Mammary epithelial cell (primary cell): ENCODE measurements at regions of chr20 and their contacts with region 1.

Region 1: DNA sequence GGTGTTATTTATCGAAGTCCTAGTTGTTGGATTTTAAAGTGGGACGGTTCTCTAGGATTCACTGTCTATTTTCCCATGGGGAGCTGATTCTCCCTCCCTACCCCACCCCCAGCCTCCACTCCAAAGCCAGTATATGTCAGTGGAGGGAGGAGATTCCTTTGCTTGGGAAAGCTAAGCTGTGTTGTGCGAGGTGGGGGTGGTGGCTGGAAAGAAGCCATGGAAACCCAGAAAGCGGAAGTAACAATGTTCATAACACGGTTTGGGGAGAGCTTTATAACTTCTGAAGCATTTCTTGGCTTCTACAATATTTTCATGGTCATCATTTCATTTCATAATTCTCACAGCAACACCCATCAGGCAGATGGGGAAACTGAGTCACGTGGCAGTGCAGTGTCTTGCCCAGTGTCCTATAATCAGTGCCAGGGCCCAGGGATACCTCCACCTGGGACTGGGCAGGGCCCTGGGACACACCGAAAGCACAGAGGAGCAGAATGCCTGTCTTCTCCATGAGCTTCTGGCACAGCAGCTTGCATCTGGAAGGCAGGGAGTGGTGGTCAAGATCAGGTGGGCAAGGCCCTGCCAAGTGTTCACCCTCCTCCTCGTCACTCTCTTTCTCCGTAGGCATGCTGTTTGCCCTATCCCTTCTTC is 4.5 kb downstream of the SUN5 start:
- DNase-seq: no peak
- H3K4me3 ChIP-seq: no peak overlapping the region
- H3K27ac ChIP-seq: no peak overlapping the region
- H3K4me1 ChIP-seq: no peaks in the 10 kb centered on the region
- H3K27me3 ChIP-seq: peaks cover 1% of the 10 kb centered on the region
- CTCF ChIP-seq: no peak

Region 2: DNA sequence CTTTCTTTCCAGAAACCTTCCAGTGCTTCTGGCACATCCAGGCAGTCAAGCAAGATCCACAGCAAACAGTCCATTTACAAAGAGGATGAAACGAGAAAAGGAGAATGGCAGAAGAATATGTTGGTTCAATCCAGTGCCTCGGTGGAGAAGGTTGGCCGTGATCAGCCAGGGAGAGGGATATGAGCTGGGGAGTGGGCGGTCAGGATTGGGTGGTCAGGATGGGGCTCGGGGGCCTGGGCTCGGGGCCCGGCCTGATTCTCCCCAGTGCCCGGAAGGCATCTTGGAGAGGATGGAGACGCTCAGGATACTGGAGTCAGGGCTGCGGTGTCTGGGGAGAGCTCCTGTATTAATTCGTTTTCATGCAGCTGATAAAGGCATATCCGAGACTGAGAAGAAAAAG is 79.7 kb before region 1 on chr20:
- CTCF ChIA-PET with region 1: no interaction called
- dilution Hi-C with region 1: loop called (anchors 5 kb)
- in situ Hi-C with region 1: no loop called
- intact Hi-C with region 1: no loop called
- DNase-seq: no peak
- H3K4me3 ChIP-seq: no peak overlapping the region
- H3K27ac ChIP-seq: no peak overlapping the region
- H3K4me1 ChIP-seq: no peaks in the 10 kb centered on the region
- H3K27me3 ChIP-seq: no peaks in the 10 kb centered on the region
- CTCF ChIP-seq: no peak

Region 3: GRCh38 chr20:32945710-32946221 is 54.0 kb before region 1 on chr20:
- CTCF ChIA-PET with region 1: no interaction called
- dilution Hi-C with region 1: loop called (anchors 5 kb)
- in situ Hi-C with region 1: no loop called
- intact Hi-C with region 1: no loop called
- DNase-seq: peak; percentile 4
- H3K4me3 ChIP-seq: no peak overlapping the region
- H3K27ac ChIP-seq: no peak overlapping the region
- H3K4me1 ChIP-seq: no peaks in the 10 kb centered on the region
- H3K27me3 ChIP-seq: no peaks in the 10 kb centered on the region
- CTCF ChIP-seq: peak; percentile 43 to 73

Region 4: DNA sequence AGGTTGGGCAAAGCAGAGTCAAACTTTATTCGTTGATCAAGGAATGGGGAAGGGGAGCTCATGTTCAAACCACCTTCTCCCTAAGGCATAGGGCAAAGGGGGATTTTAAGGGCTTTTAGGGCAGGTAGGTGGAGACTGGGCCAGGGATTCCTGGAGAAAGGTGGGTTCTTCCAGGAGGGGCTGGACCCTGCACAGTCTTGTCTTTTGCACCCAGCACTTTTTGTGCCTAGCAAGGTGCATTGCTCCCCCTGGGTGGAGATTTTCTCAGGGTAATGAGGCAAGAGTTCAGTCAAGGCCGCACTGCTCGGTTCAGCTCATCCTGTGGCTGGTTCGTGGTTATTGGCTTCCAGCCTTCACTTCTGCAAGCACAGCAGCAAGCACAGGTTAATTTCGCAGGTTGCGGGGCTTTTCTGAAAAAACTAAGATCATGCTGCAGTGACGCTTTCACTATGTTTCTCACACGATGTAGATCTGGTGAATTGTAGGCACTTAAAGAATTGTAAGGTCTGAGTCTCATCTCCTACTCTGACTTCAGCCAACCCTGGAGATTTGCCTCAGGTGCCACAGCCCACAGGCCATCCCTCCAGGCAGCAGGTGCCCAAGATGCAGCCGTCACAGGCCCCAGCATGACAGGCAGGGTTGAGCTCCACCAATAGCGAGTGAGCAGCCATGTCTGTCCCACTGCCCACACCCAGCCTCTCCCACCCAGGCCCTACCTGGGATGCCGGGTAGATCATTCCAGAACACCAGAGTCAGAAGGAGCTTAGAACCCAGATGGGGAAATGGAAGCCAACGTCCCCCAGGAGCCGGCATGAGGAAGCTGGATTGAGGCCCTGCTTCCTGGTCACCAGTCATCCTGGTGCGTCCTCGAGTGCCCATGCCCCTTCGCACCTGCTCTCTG is 32.6 kb before region 1 on chr20:
- CTCF ChIA-PET with region 1: no interaction called
- dilution Hi-C with region 1: no loop called
- in situ Hi-C with region 1: no loop called
- intact Hi-C with region 1: no loop called
- DNase-seq: no peak
- H3K4me3 ChIP-seq: no peak overlapping the region
- H3K27ac ChIP-seq: no peak overlapping the region
- H3K4me1 ChIP-seq: no peaks in the 10 kb centered on the region
- H3K27me3 ChIP-seq: no peaks in the 10 kb centered on the region
- CTCF ChIP-seq: no peak

Region 5: GRCh38 chr20:33062105-33062824 is 62.5 kb after region 1 on chr20:
- CTCF ChIA-PET with region 1: no interaction called
- dilution Hi-C with region 1: loop called (anchors 5 kb)
- in situ Hi-C with region 1: no loop called
- intact Hi-C with region 1: no loop called
- DNase-seq: no peak
- H3K4me3 ChIP-seq: no peak overlapping the region
- H3K27ac ChIP-seq: no peak overlapping the region
- H3K4me1 ChIP-seq: no peaks in the 10 kb centered on the region
- H3K27me3 ChIP-seq: no peaks in the 10 kb centered on the region
- CTCF ChIP-seq: no peak